Right lobe of liver (tissue), 6 donors: ENCODE measurements at regions of chr1 and their contacts with region 1.

Region 1: GRCh38 chr1:177170756-177171535 is at the start of gene BRINP2:
- DNase-seq: peak in 2 of 3 donors; percentile 29 to 55
- ATAC-seq: peak; percentile 42 to 65 (median 57)
- H3K4me3 ChIP-seq: peak within 1 kb of the TSS in 2 of 3 donors; percentile 0 to 3
- H3K27ac ChIP-seq: no peak within 1 kb of the TSS
- H3K4me1 ChIP-seq: peaks cover 0 to 7% (median 0%) of the 10 kb centered on the region in 4 donors
- H3K27me3 ChIP-seq: peaks cover 0 to 7% of the 10 kb centered on the region in 2 donors
- CTCF ChIP-seq: no peak
- POLR2A ChIP-seq: no peak
- total RNA-seq, gene BRINP2: 0.09 to 0.57 (median 0.36) TPM

Region 2: GRCh38 chr1:176897350-176898236 is 273.4 kb before region 1 on chr1:
- intact Hi-C with region 1: loop called in 1 of 2 experiments (anchors 10 kb)
- DNase-seq: peak in 2 of 3 donors; percentile 34 to 55
- ATAC-seq: peak; percentile 68 to 79 (median 74)
- H3K4me3 ChIP-seq: no peak overlapping the region
- H3K27ac ChIP-seq: no peak overlapping the region
- H3K4me1 ChIP-seq: peaks cover 0 to 5% (median 0%) of the 10 kb centered on the region in 4 donors
- H3K27me3 ChIP-seq: peaks cover 0 to 4% of the 10 kb centered on the region in 2 donors
- CTCF ChIP-seq: peak; percentile 46 to 67 (median 60)
- POLR2A ChIP-seq: no peak

Region 3: DNA sequence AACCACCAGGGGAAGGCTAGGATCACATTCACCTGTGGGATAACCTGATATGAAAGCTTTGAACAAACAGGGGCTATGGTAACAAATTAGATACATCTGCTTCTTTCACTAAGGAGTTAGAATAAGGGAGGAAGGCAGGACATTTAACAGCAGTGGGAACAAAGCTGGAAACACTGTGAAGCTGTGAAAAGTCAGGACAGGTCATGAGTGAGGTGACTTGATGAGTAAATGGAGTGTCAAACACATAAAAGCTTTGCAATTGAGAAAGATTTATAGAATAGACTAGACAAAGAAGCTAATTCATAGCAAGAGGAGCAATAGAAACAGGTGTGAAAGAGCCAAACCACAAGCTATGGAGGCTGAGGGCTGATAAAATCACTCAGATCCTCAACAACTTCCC is 116.4 kb before region 1 on chr1:
- intact Hi-C with region 1: no loop called
- DNase-seq: no peak
- ATAC-seq: no peak
- H3K4me3 ChIP-seq: no peak overlapping the region
- H3K27ac ChIP-seq: no peak overlapping the region
- H3K4me1 ChIP-seq: no peaks in the 10 kb centered on the region
- H3K27me3 ChIP-seq: no peaks in the 10 kb centered on the region
- CTCF ChIP-seq: no peak
- POLR2A ChIP-seq: no peak